HCT116 (cell line): ENCODE measurements at regions of chr19 and their contacts with region 1.

Region 1: DNA sequence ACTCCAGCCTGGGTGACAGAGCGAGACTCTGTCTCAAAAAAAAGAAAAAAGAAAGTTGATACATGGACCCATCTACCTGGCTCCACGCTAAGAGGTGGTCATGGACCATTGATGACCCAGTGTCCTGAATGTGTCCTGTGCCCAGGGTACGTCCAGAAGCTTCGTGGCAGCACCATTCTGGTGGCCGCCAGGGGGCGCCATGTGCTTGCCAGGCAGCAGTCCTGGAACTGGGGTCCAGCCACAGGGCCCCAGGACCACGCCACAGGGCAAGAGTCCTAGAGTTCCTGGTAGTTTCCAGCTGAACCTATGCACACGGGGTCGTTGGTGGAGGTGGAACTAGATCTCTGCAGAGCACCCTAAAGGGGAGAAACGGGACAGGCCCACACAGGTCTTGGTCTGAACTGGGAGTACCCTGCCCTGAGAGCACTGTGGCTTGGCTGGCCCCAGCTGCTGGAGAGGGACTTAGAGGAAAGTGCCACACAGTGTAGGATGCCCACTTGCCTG is 19.9 kb upstream of the FBXO27 start:
- DNase-seq: no peak
- ATAC-seq: peak; percentile 99
- H3K4me3 ChIP-seq: no peak overlapping the region
- H3K27ac ChIP-seq: no peak overlapping the region
- H3K4me1 ChIP-seq: peaks cover 0 to 14% of the 10 kb centered on the region in 2 experiments; a peak in 1 of 4 replicates
- H3K27me3 ChIP-seq: no peaks in the 10 kb centered on the region
- CTCF ChIP-seq: peak; percentile 84 to 94 (median 92); a peak in 5 of 6 replicates
- POLR2A ChIP-seq: no peak
- RAD21 ChIP-seq: peak; percentile 95

Region 2: DNA sequence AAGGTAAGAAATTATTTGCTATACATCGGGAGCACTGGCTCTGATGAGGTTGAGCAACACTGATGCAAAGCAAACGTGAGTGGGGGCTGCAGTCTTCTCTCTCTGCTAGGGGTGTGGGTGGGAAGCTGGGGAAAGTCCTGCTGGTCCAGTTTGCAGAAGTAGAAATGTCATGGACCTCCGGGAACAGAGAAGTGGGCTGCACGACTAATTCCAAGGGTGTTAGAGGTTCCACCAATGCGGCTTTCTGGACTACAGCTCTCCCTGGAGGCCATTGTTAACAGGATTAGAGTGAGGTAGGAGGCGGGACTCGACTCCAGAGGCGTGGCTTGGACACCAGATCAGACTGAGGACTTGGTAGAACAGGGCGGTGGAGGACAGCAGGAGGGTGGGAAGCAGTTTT is 14.2 kb before region 1 on chr19:
- CTCF ChIA-PET with region 1: interaction called, 12 read pairs
- POLR2A ChIA-PET with region 1: no interaction called
- RAD21 ChIA-PET with region 1: no interaction called
- intact Hi-C with region 1: no loop called
- DNase-seq: peak; percentile 37
- ATAC-seq: peak; percentile 100
- H3K4me3 ChIP-seq: 0 out of 4 replicates have a peak overlapping the region, but pooled peaks have one; percentile 9 to 29
- H3K27ac ChIP-seq: no peak overlapping the region
- H3K4me1 ChIP-seq: peaks cover 9 to 12% of the 10 kb centered on the region in 2 experiments
- H3K27me3 ChIP-seq: no peaks in the 10 kb centered on the region
- CTCF ChIP-seq: peak; percentile 16 to 53 (median 36); a peak in 4 of 6 replicates
- POLR2A ChIP-seq: no peak
- RAD21 ChIP-seq: peak; percentile 72

Region 3: GRCh38 chr19:39110263-39110967 is 58.1 kb after region 1 on chr19:
- CTCF ChIA-PET with region 1: interaction called, 10 read pairs
- POLR2A ChIA-PET with region 1: no interaction called
- RAD21 ChIA-PET with region 1: no interaction called
- intact Hi-C with region 1: loop called (anchors 5 kb)
- DNase-seq: peak; percentile 41
- ATAC-seq: peak; percentile 78
- H3K4me3 ChIP-seq: no peak overlapping the region
- H3K27ac ChIP-seq: no peak overlapping the region
- H3K4me1 ChIP-seq: peaks cover 17 to 29% of the 10 kb centered on the region in 2 experiments
- H3K27me3 ChIP-seq: no peaks in the 10 kb centered on the region
- CTCF ChIP-seq: peak; percentile 55 to 87 (median 80)
- POLR2A ChIP-seq: no peak
- RAD21 ChIP-seq: peak; percentile 75

Region 4: DNA sequence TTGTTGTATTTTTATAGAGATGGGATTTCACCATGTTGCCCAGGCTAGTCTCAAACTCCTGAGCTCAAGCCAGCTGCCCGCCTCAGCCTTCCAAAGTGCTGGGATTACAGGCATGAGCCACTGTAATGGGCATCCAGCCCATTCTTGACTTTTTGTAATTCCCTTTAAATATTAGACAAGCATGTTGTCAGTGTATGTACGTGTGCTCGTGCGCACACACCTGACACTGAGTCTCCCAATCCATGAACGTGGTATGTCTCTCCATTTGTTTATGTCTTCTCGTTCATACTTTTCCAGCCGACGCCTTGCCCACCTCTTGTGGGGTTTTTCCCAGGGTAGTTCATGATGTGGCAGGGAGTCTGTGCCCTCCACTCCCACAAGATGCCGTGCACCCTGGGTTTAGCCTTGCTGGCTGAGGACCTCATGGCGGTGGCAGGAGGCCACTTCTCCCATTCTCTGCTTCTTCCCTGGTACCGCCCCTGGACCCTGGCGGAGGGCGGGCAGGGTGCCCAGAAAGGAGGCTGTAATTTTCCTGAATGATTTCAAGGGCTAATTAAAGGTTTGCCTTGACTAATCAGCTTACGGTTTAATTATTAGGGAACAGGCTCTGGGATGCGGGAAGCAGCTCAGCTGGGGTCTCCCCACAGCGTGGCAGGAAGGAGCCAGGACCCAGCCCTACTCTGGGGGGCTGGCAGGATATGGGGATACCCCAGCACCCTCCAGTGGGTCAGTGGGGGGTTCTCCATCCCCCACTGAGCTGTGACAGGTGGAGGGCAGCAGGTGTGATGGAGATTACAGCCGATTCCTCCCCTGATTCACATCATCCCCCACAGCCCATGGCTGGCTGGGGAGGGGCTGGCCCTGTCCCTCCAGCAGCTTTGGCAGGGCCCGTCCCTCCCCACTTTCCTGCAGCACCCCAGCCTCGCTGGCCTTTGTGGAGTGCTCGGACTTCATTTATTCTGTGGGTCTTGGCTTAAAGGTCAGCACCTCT is 86.2 kb after region 1 on chr19:
- CTCF ChIA-PET with region 1: no interaction called
- POLR2A ChIA-PET with region 1: no interaction called
- RAD21 ChIA-PET with region 1: no interaction called
- intact Hi-C with region 1: no loop called
- DNase-seq: no peak
- ATAC-seq: no peak
- H3K4me3 ChIP-seq: no peak overlapping the region
- H3K27ac ChIP-seq: no peak overlapping the region
- H3K4me1 ChIP-seq: peaks cover 11 to 18% of the 10 kb centered on the region in 2 experiments
- H3K27me3 ChIP-seq: no peaks in the 10 kb centered on the region
- CTCF ChIP-seq: no peak
- POLR2A ChIP-seq: no peak
- RAD21 ChIP-seq: no peak

Region 5: DNA sequence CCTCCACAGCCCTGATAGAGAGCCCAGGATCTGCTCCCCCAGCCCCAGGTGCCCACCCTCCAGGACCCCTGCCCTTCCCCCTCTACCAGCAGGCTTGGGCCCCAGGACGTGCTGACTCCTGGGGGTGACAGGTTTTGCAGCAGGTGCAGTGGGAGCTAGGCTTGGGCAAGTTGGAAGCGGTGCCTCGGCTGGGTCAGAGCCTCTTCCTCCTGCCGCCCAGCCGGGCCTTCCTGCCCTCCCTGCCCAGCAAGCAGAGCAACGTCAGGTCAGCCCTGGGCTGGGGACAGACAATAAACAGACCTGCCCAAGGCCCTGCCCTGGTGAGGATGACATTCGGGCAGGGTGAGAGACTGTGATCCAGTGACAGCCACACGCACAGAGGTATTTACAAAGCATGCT is 135.3 kb after region 1 on chr19:
- CTCF ChIA-PET with region 1: no interaction called
- POLR2A ChIA-PET with region 1: no interaction called
- RAD21 ChIA-PET with region 1: no interaction called
- intact Hi-C with region 1: loop called (anchors 1 kb)
- DNase-seq: no peak
- ATAC-seq: peak; percentile 35; the same call in 1 of the 2 replicates
- H3K4me3 ChIP-seq: no peak overlapping the region
- H3K27ac ChIP-seq: no peak overlapping the region
- H3K4me1 ChIP-seq: peaks cover 0 to 6% of the 10 kb centered on the region in 2 experiments; a peak in 1 of 4 replicates
- H3K27me3 ChIP-seq: no peaks in the 10 kb centered on the region
- CTCF ChIP-seq: no peak
- POLR2A ChIP-seq: no peak
- RAD21 ChIP-seq: no peak